ENCODE measurements at regions of chr17 and their contacts with region 1.

Region 1: GRCh38 chr17:17280613-17281549 is at the start of gene COPS3:
- DNase-seq: peak; percentile 99
- ATAC-seq: peak; percentile 88
- H3K4me3 ChIP-seq: peak within 1 kb of the TSS; percentile 67 to 99 (median 98)
- H3K4me3 Mint-ChIP-seq: peak within 1 kb of the TSS; percentile 86
- H3K27ac ChIP-seq: peak within 1 kb of the TSS; percentile 87 to 98
- H3K27ac Mint-ChIP-seq: peak within 1 kb of the TSS; percentile 85
- H3K4me1 ChIP-seq: peaks cover 20% of the 10 kb centered on the region in 2 donors
- H3K4me1 Mint-ChIP-seq: peaks cover 36% of the 10 kb centered on the region
- H3K27me3 ChIP-seq: no peaks in the 10 kb centered on the region
- H3K27me3 Mint-ChIP-seq: no peaks in the 10 kb centered on the region
- CTCF ChIP-seq: no peak
- total RNA-seq, gene COPS3: 45.5 and 46.9 TPM in 2 replicates

Region 2: GRCh38 chr17:16537130-16537458 is 743.8 kb before region 1 on chr17:
- CTCF ChIA-PET with region 1: no interaction called
- POLR2A ChIA-PET with region 1: no interaction called
- intact Hi-C with region 1: loop called (anchors 5 kb)
- DNase-seq: no peak
- ATAC-seq: no peak
- H3K4me3 ChIP-seq: no peak overlapping the region
- H3K4me3 Mint-ChIP-seq: peak overlapping the region; percentile 98
- H3K27ac ChIP-seq: no peak overlapping the region
- H3K27ac Mint-ChIP-seq: peak overlapping the region; percentile 99
- H3K4me1 ChIP-seq: peaks cover 9 to 13% of the 10 kb centered on the region in 2 donors
- H3K4me1 Mint-ChIP-seq: peaks cover 18% of the 10 kb centered on the region
- H3K27me3 ChIP-seq: no peaks in the 10 kb centered on the region
- H3K27me3 Mint-ChIP-seq: no peaks in the 10 kb centered on the region
- CTCF ChIP-seq: no peak

Region 3: DNA sequence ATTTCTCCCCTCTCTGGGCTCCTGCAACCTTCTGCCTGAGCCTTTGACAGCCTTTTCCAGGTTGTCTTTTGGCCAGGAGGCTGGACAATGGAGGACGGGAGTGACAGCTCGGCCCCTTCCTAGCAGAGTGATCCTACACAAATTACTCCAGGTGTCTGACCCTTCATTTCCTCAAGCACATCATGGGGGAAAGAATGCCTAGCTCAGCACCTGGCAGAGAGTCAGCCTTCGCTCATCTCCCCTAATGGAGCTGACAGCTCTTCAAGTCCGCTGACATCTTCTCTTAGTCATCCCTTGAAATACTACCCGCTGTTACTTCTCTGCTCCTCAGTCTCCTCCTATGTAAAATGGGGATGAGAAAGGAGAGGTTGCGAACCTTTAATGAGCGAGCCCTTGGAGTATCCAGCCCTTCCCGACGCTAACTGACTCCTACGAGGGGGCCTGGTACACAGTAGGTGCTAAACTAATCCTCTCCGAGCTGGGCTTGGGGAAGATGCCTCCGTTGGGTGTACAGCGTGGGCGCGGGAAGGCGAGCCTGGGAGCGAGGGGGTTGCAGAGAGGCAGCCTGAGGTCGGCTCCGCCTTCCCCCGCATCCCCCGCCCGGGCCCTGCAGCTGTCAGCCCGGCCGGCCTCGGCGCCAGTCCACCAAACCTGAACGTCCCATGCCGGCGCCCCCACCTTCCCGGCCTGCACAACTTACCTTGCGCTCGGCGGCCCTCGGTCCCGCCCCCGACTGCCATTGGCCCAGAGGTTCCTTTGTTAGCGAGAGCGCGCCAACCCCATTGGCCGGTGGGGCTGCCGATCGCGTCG is 239.1 kb before region 1 on chr17:
- CTCF ChIA-PET with region 1: no interaction called
- POLR2A ChIA-PET with region 1: no interaction called
- intact Hi-C with region 1: loop called (anchors 2 kb)
- DNase-seq: peak; percentile 97
- ATAC-seq: peak; percentile 92
- H3K4me3 ChIP-seq: peak overlapping the region in 4 of 5 experiments; percentile 43 to 55 (median 50)
- H3K4me3 Mint-ChIP-seq: peak overlapping the region; percentile 71
- H3K27ac ChIP-seq: no peak overlapping the region
- H3K27ac Mint-ChIP-seq: peak overlapping the region; percentile 26
- H3K4me1 ChIP-seq: peaks cover 40 to 48% of the 10 kb centered on the region in 2 donors
- H3K4me1 Mint-ChIP-seq: peaks cover 47% of the 10 kb centered on the region
- H3K27me3 ChIP-seq: no peaks in the 10 kb centered on the region
- H3K27me3 Mint-ChIP-seq: no peaks in the 10 kb centered on the region
- CTCF ChIP-seq: no peak

Region 4: GRCh38 chr17:17098426-17099179 is 182.3 kb before region 1 on chr17:
- CTCF ChIA-PET with region 1: no interaction called
- POLR2A ChIA-PET with region 1: no interaction called
- intact Hi-C with region 1: no loop called
- DNase-seq: no peak
- ATAC-seq: no peak
- H3K4me3 ChIP-seq: no peak overlapping the region
- H3K4me3 Mint-ChIP-seq: no peak overlapping the region
- H3K27ac ChIP-seq: no peak overlapping the region
- H3K27ac Mint-ChIP-seq: no peak overlapping the region
- H3K4me1 ChIP-seq: no peaks in the 10 kb centered on the region
- H3K4me1 Mint-ChIP-seq: peaks cover 17% of the 10 kb centered on the region
- H3K27me3 ChIP-seq: no peaks in the 10 kb centered on the region
- H3K27me3 Mint-ChIP-seq: no peaks in the 10 kb centered on the region
- CTCF ChIP-seq: no peak

Region 5: DNA sequence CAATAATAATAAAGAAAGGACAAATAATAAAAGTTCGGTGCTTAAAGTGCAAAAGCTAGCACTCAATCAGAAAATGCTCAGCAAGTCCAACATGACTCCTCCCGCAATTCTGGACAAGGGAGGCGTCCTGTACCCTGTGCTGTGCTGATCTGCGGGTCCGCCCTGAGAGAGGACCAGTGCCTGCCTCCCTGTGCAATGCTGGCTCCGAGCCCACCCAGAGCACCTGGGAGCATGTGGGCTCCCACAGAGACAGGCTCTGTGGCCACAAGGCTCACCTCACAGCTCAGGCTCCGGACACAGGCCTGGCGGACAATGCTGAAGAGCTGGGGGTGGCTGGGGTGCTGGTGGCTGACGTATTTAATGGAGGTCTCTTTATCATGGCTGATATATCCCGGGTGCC is 55.0 kb before region 1 on chr17:
- CTCF ChIA-PET with region 1: no interaction called
- POLR2A ChIA-PET with region 1: no interaction called
- intact Hi-C with region 1: no loop called
- DNase-seq: no peak
- ATAC-seq: no peak
- H3K4me3 ChIP-seq: no peak overlapping the region
- H3K4me3 Mint-ChIP-seq: no peak overlapping the region
- H3K27ac ChIP-seq: no peak overlapping the region
- H3K27ac Mint-ChIP-seq: no peak overlapping the region
- H3K4me1 ChIP-seq: no peaks in the 10 kb centered on the region
- H3K4me1 Mint-ChIP-seq: no peaks in the 10 kb centered on the region
- H3K27me3 ChIP-seq: no peaks in the 10 kb centered on the region
- H3K27me3 Mint-ChIP-seq: no peaks in the 10 kb centered on the region
- CTCF ChIP-seq: no peak

Region 6: DNA sequence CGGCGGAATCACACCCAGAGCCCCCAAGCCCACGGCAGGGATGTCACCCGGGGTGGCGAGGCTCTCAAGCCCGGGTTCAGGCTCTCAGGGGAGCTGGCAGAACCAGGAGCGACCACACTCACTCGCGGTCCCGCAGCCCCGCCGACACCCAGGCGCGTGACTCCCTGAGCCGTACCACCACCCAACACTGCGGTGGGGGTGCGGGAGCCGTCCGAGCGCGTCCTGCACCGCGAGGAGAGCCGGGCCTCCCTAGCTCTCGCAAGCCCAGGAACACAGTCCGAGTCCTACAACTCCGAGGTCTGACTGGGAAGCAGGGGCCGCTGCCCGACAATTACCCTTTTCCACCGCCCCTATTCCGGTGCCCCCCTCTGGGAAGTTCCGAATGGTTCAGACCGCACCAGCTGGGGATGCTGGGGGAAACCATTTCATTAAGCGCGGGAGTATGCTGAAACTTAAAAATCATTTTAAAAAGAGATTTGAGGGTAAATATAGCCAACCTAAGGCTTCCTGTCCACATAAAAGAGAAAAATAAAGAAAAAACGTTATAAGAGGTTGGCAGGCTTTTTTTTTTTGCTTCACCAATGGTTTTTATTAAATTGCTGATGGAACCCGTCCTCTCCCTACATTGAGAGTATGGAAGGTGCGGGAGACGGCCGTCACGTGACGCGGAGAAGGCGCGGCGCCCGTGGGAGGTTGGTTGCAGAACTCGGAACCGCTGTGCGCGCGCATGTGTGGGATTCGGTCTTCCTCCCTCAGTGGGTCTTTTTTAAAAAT is 43.7 kb before region 1 on chr17 and contains the start of gene FLCN:
- CTCF ChIA-PET with region 1: no interaction called
- POLR2A ChIA-PET with region 1: interaction called, 8 read pairs
- intact Hi-C with region 1: loop called (anchors 1 kb)
- DNase-seq: peak; percentile 98
- ATAC-seq: peak; percentile 89
- H3K4me3 ChIP-seq: peak within 1 kb of the TSS; percentile 83 to 96 (median 91)
- H3K4me3 Mint-ChIP-seq: peak within 1 kb of the TSS; percentile 91
- H3K27ac ChIP-seq: peak within 1 kb of the TSS; percentile 95 to 100
- H3K27ac Mint-ChIP-seq: peak within 1 kb of the TSS; percentile 99
- H3K4me1 ChIP-seq: peaks cover 9 to 21% of the 10 kb centered on the region in 2 donors
- H3K4me1 Mint-ChIP-seq: peaks cover 24% of the 10 kb centered on the region
- H3K27me3 ChIP-seq: no peaks in the 10 kb centered on the region
- H3K27me3 Mint-ChIP-seq: no peaks in the 10 kb centered on the region
- CTCF ChIP-seq: no peak
- total RNA-seq, gene FLCN: 128 and 144 TPM in 2 replicates

Region 7: DNA sequence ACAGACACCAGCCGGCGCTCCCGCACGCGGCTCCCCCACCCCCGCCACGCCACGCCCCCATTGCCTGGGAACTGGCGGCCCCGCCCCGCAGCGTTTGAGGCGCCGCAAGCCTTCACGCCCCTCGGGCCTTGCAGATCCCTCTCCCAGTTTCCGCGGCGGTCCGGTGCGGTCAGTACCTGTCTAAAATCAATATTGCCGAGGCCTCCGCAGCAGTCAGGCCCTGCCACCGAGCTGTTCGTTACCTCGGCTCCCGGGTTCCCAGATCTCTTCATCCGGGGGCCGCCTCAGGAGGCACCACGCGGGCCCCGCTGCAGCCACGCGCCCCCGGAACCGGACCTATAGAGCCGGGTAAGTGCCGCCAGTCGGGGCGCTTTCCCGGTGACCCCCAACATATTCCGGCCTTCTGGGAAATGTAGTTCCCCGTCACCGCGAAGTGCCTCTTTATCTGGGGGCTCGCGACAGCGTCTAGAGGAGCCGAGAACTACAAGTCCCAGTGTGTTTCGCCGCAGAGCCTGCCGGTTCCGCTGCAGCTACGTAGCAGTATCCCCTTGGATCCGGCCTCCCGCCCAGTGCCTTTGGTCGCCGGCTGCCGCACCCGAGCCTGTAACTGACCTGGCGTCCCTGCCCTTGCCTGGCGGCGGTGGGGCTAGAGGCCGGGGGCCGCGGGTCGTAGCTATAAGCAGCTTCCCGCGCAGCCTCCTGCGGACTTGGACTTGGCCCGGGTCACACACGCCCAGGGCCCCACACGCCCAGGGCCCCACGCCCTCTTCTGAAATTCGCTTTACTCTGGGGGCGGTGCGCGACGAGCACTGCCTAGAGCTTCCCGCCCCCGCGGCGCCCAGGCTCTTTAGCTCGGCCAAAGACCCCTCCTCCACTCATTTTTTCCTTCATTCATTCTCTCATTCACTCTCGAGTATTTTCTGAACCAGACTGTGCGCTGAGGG is 310.7 kb after region 1 on chr17 and contains the start of gene PEMT:
- CTCF ChIA-PET with region 1: no interaction called
- POLR2A ChIA-PET with region 1: no interaction called
- intact Hi-C with region 1: loop called (anchors 2 kb)
- DNase-seq: peak; percentile 98
- ATAC-seq: peak; percentile 92
- H3K4me3 ChIP-seq: peak within 1 kb of the TSS; percentile 65 to 85 (median 71)
- H3K4me3 Mint-ChIP-seq: peak within 1 kb of the TSS; percentile 93
- H3K27ac ChIP-seq: peak within 1 kb of the TSS; percentile 67 to 80
- H3K27ac Mint-ChIP-seq: peak within 1 kb of the TSS; percentile 86
- H3K4me1 ChIP-seq: peaks cover 12 to 22% of the 10 kb centered on the region in 2 donors
- H3K4me1 Mint-ChIP-seq: peaks cover 16% of the 10 kb centered on the region
- H3K27me3 ChIP-seq: no peaks in the 10 kb centered on the region
- H3K27me3 Mint-ChIP-seq: no peaks in the 10 kb centered on the region
- CTCF ChIP-seq: no peak
- total RNA-seq, gene PEMT: 9.0 and 10.7 TPM in 2 replicates

Region 8: GRCh38 chr17:17694169-17695081 is 413.5 kb after region 1 on chr17:
- CTCF ChIA-PET with region 1: no interaction called
- POLR2A ChIA-PET with region 1: no interaction called
- intact Hi-C with region 1: no loop called
- DNase-seq: peak; percentile 83
- ATAC-seq: peak; percentile 75
- H3K4me3 ChIP-seq: peak overlapping the region; percentile 69 to 90 (median 85)
- H3K4me3 Mint-ChIP-seq: peak overlapping the region; percentile 95
- H3K27ac ChIP-seq: peak overlapping the region; percentile 88 to 94
- H3K27ac Mint-ChIP-seq: peak overlapping the region; percentile 98
- H3K4me1 ChIP-seq: peaks cover 48 to 52% of the 10 kb centered on the region in 2 donors
- H3K4me1 Mint-ChIP-seq: peaks cover 57% of the 10 kb centered on the region
- H3K27me3 ChIP-seq: no peaks in the 10 kb centered on the region
- H3K27me3 Mint-ChIP-seq: no peaks in the 10 kb centered on the region
- CTCF ChIP-seq: no peak

Region 9: GRCh38 chr17:18260332-18261144 is 979.7 kb after region 1 on chr17 and contains the start of gene MIEF2:
- CTCF ChIA-PET with region 1: no interaction called
- POLR2A ChIA-PET with region 1: no interaction called
- intact Hi-C with region 1: loop called (anchors 5 kb)
- DNase-seq: peak; percentile 94
- ATAC-seq: peak; percentile 85
- H3K4me3 ChIP-seq: peak within 1 kb of the TSS; percentile 45 to 88 (median 77)
- H3K4me3 Mint-ChIP-seq: peak within 1 kb of the TSS; percentile 86
- H3K27ac ChIP-seq: peak within 1 kb of the TSS; percentile 84 to 89
- H3K27ac Mint-ChIP-seq: peak within 1 kb of the TSS; percentile 87
- H3K4me1 ChIP-seq: peaks cover 28 to 43% of the 10 kb centered on the region in 2 donors
- H3K4me1 Mint-ChIP-seq: peaks cover 31% of the 10 kb centered on the region
- H3K27me3 ChIP-seq: no peaks in the 10 kb centered on the region
- H3K27me3 Mint-ChIP-seq: no peaks in the 10 kb centered on the region
- CTCF ChIP-seq: no peak
- total RNA-seq, gene MIEF2: 16.3 and 18.7 TPM in 2 replicates

Measured in B cell (primary cell).